CD4-positive, alpha-beta memory T cell (primary cell): ENCODE measurements at regions of chr10 and their contacts with region 1.

Region 1: GRCh38 chr10:114304017-114304570 is 65.0 kb downstream of the VWA2 start:
- DNase-seq: peak; percentile 48 to 66 (median 55)
- H3K4me3 ChIP-seq: peak overlapping the region; percentile 53 to 83
- H3K4me3 Mint-ChIP-seq: peak overlapping the region; percentile 85 to 95 (median 89)
- H3K27ac ChIP-seq: peak overlapping the region; percentile 28
- H3K27ac Mint-ChIP-seq: peak overlapping the region in 6 of 7 donors; percentile 34 to 87 (median 58)
- H3K4me1 ChIP-seq: peaks cover 7% of the 10 kb centered on the region
- H3K4me1 Mint-ChIP-seq: peaks cover 5 to 13% (median 8%) of the 10 kb centered on the region in 4 donors
- H3K27me3 ChIP-seq: no peaks in the 10 kb centered on the region
- H3K27me3 Mint-ChIP-seq: no peaks in the 10 kb centered on the region

Region 2: GRCh38 chr10:114208351-114208750 is 95.7 kb before region 1 on chr10:
- CTCF ChIA-PET with region 1: no interaction called
- POLR2A ChIA-PET with region 1: no interaction called
- intact Hi-C with region 1: no loop called
- DNase-seq: no peak
- H3K4me3 ChIP-seq: no peak overlapping the region
- H3K4me3 Mint-ChIP-seq: no peak overlapping the region
- H3K27ac ChIP-seq: no peak overlapping the region
- H3K27ac Mint-ChIP-seq: no peak overlapping the region
- H3K4me1 ChIP-seq: no peaks in the 10 kb centered on the region
- H3K4me1 Mint-ChIP-seq: no peaks in the 10 kb centered on the region
- H3K27me3 ChIP-seq: no peaks in the 10 kb centered on the region
- H3K27me3 Mint-ChIP-seq: peaks cover 12 to 19% of the 10 kb centered on the region in 2 donors

Region 3: DNA sequence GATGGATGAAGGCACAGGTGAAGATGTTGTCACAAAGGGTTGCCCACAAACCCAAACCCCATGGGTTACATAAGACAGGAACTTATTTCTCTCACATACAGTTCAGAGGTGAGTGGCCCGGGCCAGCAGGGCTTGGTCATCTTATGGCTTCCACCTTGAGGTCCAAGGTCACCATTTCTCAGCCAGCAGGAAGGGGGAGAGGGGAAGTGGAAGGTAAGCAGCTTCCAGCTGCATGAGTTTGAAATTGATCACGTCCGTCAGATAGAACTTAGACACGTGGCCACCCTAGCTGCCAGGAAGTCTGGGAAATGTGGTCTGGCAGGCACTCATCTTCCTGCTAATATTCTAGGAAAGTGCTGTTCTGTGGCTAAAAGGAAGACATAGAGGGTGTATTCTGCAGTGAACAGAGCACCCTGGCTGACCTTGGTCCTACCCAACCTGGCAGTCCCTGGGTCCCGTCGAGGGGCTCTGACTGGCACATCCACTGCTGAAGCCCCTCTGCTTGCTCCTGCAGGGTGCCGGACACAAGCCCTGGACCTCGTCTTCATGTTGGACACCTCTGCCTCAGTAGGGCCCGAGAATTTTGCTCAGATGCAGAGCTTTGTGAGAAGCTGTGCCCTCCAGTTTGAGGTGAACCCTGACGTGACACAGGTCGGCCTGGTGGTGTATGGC is 15.5 kb before region 1 on chr10:
- CTCF ChIA-PET with region 1: interaction called, 10 read pairs
- POLR2A ChIA-PET with region 1: no interaction called
- intact Hi-C with region 1: no loop called
- DNase-seq: no peak
- H3K4me3 ChIP-seq: no peak overlapping the region
- H3K4me3 Mint-ChIP-seq: no peak overlapping the region
- H3K27ac ChIP-seq: no peak overlapping the region
- H3K27ac Mint-ChIP-seq: no peak overlapping the region
- H3K4me1 ChIP-seq: no peaks in the 10 kb centered on the region
- H3K4me1 Mint-ChIP-seq: no peaks in the 10 kb centered on the region
- H3K27me3 ChIP-seq: no peaks in the 10 kb centered on the region
- H3K27me3 Mint-ChIP-seq: peaks cover 0 to 2% of the 10 kb centered on the region in 2 donors

Region 4: GRCh38 chr10:114334301-114334700 is 30.2 kb after region 1 on chr10:
- CTCF ChIA-PET with region 1: no interaction called
- POLR2A ChIA-PET with region 1: no interaction called
- intact Hi-C with region 1: no loop called
- DNase-seq: no peak
- H3K4me3 ChIP-seq: no peak overlapping the region
- H3K4me3 Mint-ChIP-seq: no peak overlapping the region
- H3K27ac ChIP-seq: no peak overlapping the region
- H3K27ac Mint-ChIP-seq: peak overlapping the region in 1 of 7 donors; percentile 32
- H3K4me1 ChIP-seq: no peaks in the 10 kb centered on the region
- H3K4me1 Mint-ChIP-seq: no peaks in the 10 kb centered on the region
- H3K27me3 ChIP-seq: no peaks in the 10 kb centered on the region
- H3K27me3 Mint-ChIP-seq: peaks cover 1 to 3% of the 10 kb centered on the region in 2 donors

Region 5: DNA sequence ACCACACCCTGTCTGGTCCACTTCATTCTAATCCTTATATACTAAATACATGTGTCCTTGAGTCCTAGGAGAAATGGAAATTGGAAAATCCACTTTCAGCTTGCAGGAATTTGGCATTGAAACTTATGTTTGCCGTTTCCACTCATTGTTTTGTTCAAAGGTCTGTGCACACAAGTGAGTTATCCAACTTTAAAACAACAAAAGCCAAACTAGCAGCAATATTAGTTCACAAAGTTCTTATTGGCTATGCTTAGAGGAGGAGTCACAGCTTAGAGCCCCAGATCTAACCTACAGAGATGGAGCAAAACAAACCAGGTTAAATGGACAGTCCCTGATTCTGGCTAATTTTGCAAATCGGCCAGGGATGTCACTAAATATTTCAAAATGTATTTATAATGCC is 144.8 kb after region 1 on chr10:
- CTCF ChIA-PET with region 1: no interaction called
- POLR2A ChIA-PET with region 1: no interaction called
- intact Hi-C with region 1: no loop called
- DNase-seq: no peak
- H3K4me3 ChIP-seq: no peak overlapping the region
- H3K4me3 Mint-ChIP-seq: no peak overlapping the region
- H3K27ac ChIP-seq: no peak overlapping the region
- H3K27ac Mint-ChIP-seq: no peak overlapping the region
- H3K4me1 ChIP-seq: no peaks in the 10 kb centered on the region
- H3K4me1 Mint-ChIP-seq: peaks cover 0 to 10% (median 7%) of the 10 kb centered on the region in 4 donors
- H3K27me3 ChIP-seq: no peaks in the 10 kb centered on the region
- H3K27me3 Mint-ChIP-seq: no peaks in the 10 kb centered on the region

Region 6: GRCh38 chr10:114541081-114541796 is 237.1 kb after region 1 on chr10:
- CTCF ChIA-PET with region 1: interaction called, 4 read pairs
- POLR2A ChIA-PET with region 1: interaction called, 3 read pairs
- intact Hi-C with region 1: loop called (anchors 5 kb)
- DNase-seq: peak; percentile 86 to 92 (median 90)
- H3K4me3 ChIP-seq: no peak overlapping the region
- H3K4me3 Mint-ChIP-seq: peak overlapping the region; percentile 57 to 87 (median 76)
- H3K27ac ChIP-seq: peak overlapping the region; percentile 74
- H3K27ac Mint-ChIP-seq: peak overlapping the region; percentile 89 to 100 (median 98)
- H3K4me1 ChIP-seq: peaks cover 97% of the 10 kb centered on the region
- H3K4me1 Mint-ChIP-seq: peaks cover 67 to 92% (median 86%) of the 10 kb centered on the region in 4 donors
- H3K27me3 ChIP-seq: no peaks in the 10 kb centered on the region
- H3K27me3 Mint-ChIP-seq: no peaks in the 10 kb centered on the region

Region 7: GRCh38 chr10:114703377-114704107 is 399.4 kb after region 1 on chr10:
- CTCF ChIA-PET with region 1: interaction called, 27 read pairs
- POLR2A ChIA-PET with region 1: no interaction called
- intact Hi-C with region 1: loop called (anchors 1 kb)
- DNase-seq: peak in 4 of 5 donors; percentile 13 to 25 (median 16)
- H3K4me3 ChIP-seq: no peak overlapping the region
- H3K4me3 Mint-ChIP-seq: no peak overlapping the region
- H3K27ac ChIP-seq: no peak overlapping the region
- H3K27ac Mint-ChIP-seq: no peak overlapping the region
- H3K4me1 ChIP-seq: no peaks in the 10 kb centered on the region
- H3K4me1 Mint-ChIP-seq: no peaks in the 10 kb centered on the region
- H3K27me3 ChIP-seq: no peaks in the 10 kb centered on the region
- H3K27me3 Mint-ChIP-seq: peaks cover 1 to 5% of the 10 kb centered on the region in 2 donors

Region 8: GRCh38 chr10:114821293-114821914 is 517.3 kb after region 1 on chr10 and contains the start of gene FHIP2A:
- CTCF ChIA-PET with region 1: interaction called, 10 read pairs
- POLR2A ChIA-PET with region 1: interaction called, 10 read pairs
- intact Hi-C with region 1: no loop called
- DNase-seq: peak; percentile 71 to 91 (median 86)
- H3K4me3 ChIP-seq: peak within 1 kb of the TSS; percentile 59 to 66
- H3K4me3 Mint-ChIP-seq: peak within 1 kb of the TSS; percentile 91 to 96 (median 94)
- H3K27ac ChIP-seq: peak within 1 kb of the TSS; percentile 73
- H3K27ac Mint-ChIP-seq: peak within 1 kb of the TSS; percentile 92 to 96 (median 95)
- H3K4me1 ChIP-seq: peaks cover 42% of the 10 kb centered on the region
- H3K4me1 Mint-ChIP-seq: peaks cover 26 to 39% (median 33%) of the 10 kb centered on the region in 4 donors
- H3K27me3 ChIP-seq: no peaks in the 10 kb centered on the region
- H3K27me3 Mint-ChIP-seq: no peaks in the 10 kb centered on the region
- total RNA-seq, gene FHIP2A: 25.1 to 32.1 TPM